ENCODE measurements at regions of chr16 and their contacts with region 1.

Region 1: DNA sequence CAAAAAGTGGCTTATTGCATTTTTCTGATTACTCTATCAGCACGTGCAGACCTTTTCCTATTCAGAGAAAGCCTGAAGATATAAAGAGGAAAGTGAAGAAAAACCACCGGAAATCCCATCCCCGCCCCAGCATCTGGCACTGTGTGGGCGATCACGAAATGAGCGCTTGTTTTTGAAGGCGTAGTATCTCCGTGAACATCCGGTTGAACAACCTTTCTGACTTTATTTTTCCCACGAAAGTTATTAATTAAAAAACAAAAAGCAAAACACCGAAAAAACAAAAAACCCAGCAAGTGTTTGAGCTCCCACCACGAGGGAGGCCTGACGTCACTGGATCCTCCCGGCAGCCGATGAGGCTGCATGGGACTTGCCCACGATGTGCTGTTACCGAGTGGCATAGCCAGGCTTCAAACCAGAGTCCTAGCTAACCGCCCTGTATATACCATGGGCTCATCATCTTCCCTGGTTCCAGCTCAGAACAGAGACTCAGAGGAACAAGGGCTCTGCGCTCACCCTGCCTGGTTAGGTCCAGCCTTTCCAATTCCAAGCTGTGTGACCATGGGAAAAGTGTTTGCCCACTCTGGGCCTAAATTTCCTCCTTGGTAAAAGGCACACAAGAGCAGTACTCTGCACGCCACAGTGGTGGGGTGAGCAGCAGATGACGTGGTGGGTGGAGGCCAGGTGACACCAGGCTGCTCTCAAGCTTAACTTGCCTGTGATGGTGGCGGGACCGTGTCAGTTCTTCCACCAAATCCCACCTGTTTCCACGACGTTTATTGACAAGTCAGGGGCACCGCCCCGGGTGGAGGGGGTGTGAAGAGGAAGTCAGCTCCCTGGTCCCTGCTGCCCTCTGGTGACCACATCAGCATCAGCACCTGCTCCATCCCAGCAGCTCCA is 34.3 kb upstream of the IL21R start:
- DNase-seq: no peak
- H3K4me3 ChIP-seq: peak overlapping the region; percentile 10 to 13
- H3K27ac ChIP-seq: peak overlapping the region; percentile 59
- H3K4me1 ChIP-seq: peaks cover 17% of the 10 kb centered on the region
- H3K27me3 ChIP-seq: no peaks in the 10 kb centered on the region
- CTCF ChIP-seq: peak; percentile 71 to 90 (median 73)
- POLR2A ChIP-seq: no peak

Region 2: DNA sequence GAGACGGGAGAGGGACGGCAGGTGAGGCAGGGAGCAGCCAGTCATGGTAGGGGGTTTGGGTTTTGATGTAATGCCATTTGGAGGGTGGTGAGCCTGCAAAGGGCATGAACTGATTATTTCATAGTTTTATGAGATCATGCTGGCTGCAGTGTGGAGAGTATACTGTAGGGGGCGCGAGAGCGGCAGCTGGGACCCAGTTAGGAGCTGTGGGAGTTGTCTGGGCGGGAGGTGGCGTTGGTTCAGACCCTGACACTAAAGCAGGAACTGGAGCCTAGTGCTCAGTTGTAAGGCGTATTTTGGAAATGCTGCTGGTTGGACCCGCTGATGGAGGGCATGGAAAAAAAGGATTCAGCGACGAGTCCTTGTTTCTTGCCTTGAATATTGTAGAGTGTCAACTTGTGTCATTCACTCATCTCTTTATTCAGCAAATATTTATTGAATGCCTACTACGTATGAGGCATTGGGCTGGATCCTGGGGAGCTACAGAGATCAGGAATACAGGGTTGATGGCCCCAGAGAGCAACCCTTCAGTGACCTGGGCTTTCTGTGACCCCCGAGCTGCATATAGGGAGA is 188.1 kb before region 1 on chr16:
- intact Hi-C with region 1: loop called (anchors 1 kb)
- DNase-seq: no peak
- H3K4me3 ChIP-seq: no peak overlapping the region
- H3K27ac ChIP-seq: no peak overlapping the region
- H3K4me1 ChIP-seq: no peaks in the 10 kb centered on the region
- H3K27me3 ChIP-seq: no peaks in the 10 kb centered on the region
- CTCF ChIP-seq: peak in 2 of 3 experiments; percentile 89 to 93
- POLR2A ChIP-seq: no peak

Region 3: DNA sequence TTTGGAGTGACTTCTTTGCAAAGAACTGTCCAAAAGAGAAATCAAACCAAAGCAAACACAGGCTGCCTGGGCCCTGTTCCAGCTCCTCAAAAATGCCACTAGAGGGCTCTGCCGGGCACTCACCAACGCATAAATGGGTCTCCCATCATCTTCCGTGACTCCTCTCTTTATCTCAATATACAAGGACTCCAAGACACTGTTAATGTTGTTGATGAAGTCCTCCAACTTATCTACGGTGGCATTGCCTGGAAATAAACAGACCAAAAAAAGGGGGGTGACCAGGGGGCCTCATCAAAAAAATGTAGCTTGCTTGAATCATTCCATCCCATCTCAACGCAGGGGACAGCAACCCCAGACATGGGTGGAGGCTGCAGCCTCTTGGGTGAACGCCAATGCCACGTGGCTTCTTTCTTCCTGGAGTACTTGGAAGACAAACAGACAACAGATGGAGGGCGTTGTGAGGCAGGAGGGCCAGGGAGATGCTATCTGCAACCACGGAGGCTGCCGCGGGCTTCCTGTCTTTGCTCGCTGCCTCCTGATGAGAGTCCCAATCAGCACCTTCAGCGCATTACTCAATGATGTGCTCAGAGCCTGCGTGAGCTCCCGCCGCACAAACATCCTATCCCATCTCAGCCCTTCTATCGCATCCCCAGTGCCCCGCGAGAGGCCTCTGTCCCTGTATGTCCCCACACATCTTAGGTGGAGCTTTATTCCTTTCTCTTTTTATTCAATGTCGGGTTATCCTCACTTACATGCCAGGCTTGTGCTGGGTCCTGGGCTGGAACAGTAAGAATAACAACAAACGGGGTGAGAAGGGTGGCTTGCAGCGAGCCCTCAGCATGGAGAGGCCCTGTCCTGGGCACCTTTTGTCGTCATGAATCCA is 132.4 kb before region 1 on chr16:
- intact Hi-C with region 1: loop called (anchors 5 kb)
- DNase-seq: no peak
- H3K4me3 ChIP-seq: peak overlapping the region in 1 of 2 donors; percentile 21
- H3K27ac ChIP-seq: peak overlapping the region; percentile 79
- H3K4me1 ChIP-seq: peaks cover 37% of the 10 kb centered on the region
- H3K27me3 ChIP-seq: no peaks in the 10 kb centered on the region
- CTCF ChIP-seq: peak; percentile 48 to 85 (median 67)
- POLR2A ChIP-seq: no peak

Region 4: GRCh38 chr16:27313422-27314160 is 54.1 kb before region 1 on chr16 and contains the start of gene IL4R:
- intact Hi-C with region 1: loop called (anchors 5 kb)
- DNase-seq: no peak
- H3K4me3 ChIP-seq: peak within 1 kb of the TSS; percentile 93 to 97
- H3K27ac ChIP-seq: peak within 1 kb of the TSS; percentile 98
- H3K4me1 ChIP-seq: peaks cover 50% of the 10 kb centered on the region
- H3K27me3 ChIP-seq: no peaks in the 10 kb centered on the region
- CTCF ChIP-seq: no peak
- POLR2A ChIP-seq: peak in 1 of 2 donors; percentile 24
- total RNA-seq, gene IL4R: 64.1 TPM

Region 5: DNA sequence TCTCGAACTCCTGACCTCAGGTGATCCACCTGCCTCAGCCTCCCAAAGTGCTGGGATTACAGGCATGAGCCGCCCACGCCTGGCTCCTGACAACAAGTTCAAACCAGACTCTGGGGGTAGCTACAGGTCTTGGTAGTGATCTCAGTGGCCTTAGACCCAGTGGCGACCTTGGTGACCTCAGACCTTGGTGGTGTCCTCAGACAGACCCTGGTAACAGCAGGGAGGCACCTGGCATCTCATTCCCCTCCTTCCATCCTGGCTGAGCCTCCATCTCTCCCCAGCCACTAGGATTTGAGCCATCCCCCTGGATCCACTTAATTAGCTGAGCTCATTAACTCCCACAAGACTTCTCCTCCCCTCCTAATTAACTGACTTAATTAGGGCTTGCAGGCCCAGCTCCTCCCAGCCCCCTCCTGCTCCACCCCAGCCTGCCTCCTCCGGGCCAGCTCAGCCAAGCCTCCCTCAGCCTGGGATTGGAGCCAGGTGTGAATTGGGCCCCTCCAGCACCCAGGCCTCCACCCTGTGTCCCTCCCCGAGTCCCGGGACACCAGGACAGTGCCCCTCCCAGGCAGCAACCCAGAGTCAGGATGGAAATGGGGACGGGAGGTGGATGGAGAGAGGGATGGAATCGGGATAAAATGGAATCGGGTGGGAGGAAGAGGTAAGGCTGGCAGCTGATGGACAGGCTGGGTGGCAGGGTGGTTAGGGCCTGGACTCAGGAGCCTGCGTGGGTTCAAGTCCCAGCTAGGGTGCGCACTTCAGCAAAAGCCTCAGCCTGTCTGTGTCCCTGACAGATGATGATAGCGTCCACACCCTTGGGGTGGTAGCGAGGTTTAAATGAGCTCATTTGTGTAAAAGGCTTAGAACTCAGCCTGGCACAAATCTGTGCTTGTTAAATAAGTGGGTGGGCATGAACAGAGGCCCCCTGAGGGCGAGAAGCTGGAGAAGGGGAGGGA is 913.5 kb after region 1 on chr16:
- intact Hi-C with region 1: no loop called
- DNase-seq: no peak
- H3K4me3 ChIP-seq: no peak overlapping the region
- H3K27ac ChIP-seq: no peak overlapping the region
- H3K4me1 ChIP-seq: peaks cover 8% of the 10 kb centered on the region
- H3K27me3 ChIP-seq: no peaks in the 10 kb centered on the region
- CTCF ChIP-seq: no peak
- POLR2A ChIP-seq: no peak

Measured in vagina (tissue), 2 donors.